PC-9 (cell line): ENCODE measurements at regions of chr6 and their contacts with region 1.

Region 1: DNA sequence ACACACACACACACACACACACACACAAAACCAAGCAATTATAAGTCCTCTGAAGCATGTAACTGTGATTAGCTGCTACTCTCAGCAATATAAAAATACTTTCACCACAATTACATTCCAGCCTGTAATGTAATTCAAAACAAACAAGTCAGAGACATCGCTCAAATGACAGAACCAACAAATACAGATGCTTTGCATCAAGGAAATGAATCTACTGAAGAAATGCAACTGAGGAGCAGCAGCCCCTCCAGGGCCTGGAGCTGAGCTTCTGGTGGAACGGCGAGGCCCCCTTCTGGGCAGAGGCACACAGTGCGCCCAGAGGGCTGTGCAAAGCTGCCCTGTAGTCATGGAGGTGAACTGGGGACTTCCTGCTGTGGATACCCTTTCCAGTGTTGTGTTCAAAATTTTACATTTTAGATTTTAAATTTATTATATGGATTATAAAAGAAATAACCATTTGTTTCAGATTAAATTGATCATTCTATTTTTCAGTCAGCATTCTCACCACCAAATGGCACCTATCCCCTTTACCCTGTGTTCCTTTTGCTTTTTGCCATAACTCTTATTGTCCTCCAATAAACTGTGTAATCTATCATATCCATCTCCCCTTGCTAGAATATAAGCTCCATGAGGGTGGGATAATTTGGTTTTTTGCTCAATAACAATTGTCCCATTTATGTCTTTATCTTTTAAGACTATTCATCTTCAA is 23.2 kb downstream of the ADAT2 start:
- DNase-seq: peak; percentile 80 to 86
- H3K4me3 ChIP-seq: no peak overlapping the region
- H3K27ac ChIP-seq: no peak overlapping the region
- H3K4me1 ChIP-seq: peaks cover 7% of the 10 kb centered on the region
- H3K27me3 ChIP-seq: no peaks in the 10 kb centered on the region
- CTCF ChIP-seq: peak; percentile 96

Region 2: DNA sequence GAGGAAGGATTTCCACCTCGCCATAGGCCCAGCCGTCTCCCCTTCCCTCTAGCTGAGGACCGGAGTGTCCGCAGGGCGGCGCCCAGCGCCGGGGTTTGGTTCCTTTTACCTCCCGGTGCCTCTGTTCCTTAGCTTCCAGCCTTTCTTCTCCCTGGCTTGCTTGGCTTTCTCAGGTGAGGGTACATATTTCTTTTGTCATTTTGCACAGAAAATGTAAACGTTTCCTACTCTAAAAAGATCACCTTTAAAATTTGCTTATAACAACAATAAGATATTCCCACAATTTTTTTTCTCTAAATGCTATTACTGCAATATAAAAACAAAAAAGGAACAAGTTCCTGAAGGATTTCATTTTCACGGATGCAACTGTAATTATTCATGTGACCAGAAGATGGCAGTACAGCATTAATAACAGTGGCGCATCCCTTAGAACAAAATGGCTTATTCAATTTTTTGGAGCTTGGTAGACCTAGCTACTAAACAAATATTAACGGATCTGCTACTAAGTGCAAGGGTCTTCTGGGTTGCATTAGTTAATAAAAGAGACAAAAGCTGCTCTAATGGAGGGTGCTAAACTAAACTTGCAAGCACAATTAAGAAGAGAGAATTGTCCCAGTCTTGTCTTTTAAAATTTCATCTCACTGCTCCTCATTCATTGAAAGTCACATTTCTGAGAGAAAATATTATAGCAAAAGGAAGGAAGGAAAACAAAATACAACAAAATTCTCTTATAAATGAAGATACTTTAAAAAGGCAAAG is 952.6 kb before region 1 on chr6:
- CTCF ChIA-PET with region 1: interaction called, 8 read pairs
- POLR2A ChIA-PET with region 1: no interaction called
- intact Hi-C with region 1: loop called (anchors 1 kb)
- DNase-seq: peak; percentile 58 to 71
- H3K4me3 ChIP-seq: peak overlapping the region; percentile 38; the same call in 1 of the 2 replicates
- H3K27ac ChIP-seq: no peak overlapping the region
- H3K4me1 ChIP-seq: no peaks in the 10 kb centered on the region
- H3K27me3 ChIP-seq: no peaks in the 10 kb centered on the region
- CTCF ChIP-seq: peak; percentile 91

Region 3: GRCh38 chr6:142692942-142693341 is 734.3 kb before region 1 on chr6:
- CTCF ChIA-PET with region 1: no interaction called
- POLR2A ChIA-PET with region 1: no interaction called
- intact Hi-C with region 1: loop called (anchors 1 kb)
- DNase-seq: peak; percentile 37 to 58
- H3K4me3 ChIP-seq: no peak overlapping the region
- H3K27ac ChIP-seq: no peak overlapping the region
- H3K4me1 ChIP-seq: peaks cover 21% of the 10 kb centered on the region; the same call in 1 of the 2 replicates
- H3K27me3 ChIP-seq: no peaks in the 10 kb centered on the region
- CTCF ChIP-seq: peak; percentile 97

Region 4: GRCh38 chr6:142845624-142846458 is 581.4 kb before region 1 on chr6:
- CTCF ChIA-PET with region 1: no interaction called
- POLR2A ChIA-PET with region 1: no interaction called
- intact Hi-C with region 1: loop called (anchors 5 kb)
- DNase-seq: peak; percentile 86
- H3K4me3 ChIP-seq: peak overlapping the region; percentile 51; the same call in 1 of the 2 replicates
- H3K27ac ChIP-seq: peak overlapping the region; percentile 89
- H3K4me1 ChIP-seq: peaks cover 84% of the 10 kb centered on the region
- H3K27me3 ChIP-seq: no peaks in the 10 kb centered on the region
- CTCF ChIP-seq: no peak

Region 5: GRCh38 chr6:142966294-142966693 is 461.0 kb before region 1 on chr6:
- CTCF ChIA-PET with region 1: no interaction called
- POLR2A ChIA-PET with region 1: no interaction called
- intact Hi-C with region 1: no loop called
- DNase-seq: no peak
- H3K4me3 ChIP-seq: no peak overlapping the region
- H3K27ac ChIP-seq: no peak overlapping the region
- H3K4me1 ChIP-seq: no peaks in the 10 kb centered on the region
- H3K27me3 ChIP-seq: no peaks in the 10 kb centered on the region
- CTCF ChIP-seq: no peak

Region 6: DNA sequence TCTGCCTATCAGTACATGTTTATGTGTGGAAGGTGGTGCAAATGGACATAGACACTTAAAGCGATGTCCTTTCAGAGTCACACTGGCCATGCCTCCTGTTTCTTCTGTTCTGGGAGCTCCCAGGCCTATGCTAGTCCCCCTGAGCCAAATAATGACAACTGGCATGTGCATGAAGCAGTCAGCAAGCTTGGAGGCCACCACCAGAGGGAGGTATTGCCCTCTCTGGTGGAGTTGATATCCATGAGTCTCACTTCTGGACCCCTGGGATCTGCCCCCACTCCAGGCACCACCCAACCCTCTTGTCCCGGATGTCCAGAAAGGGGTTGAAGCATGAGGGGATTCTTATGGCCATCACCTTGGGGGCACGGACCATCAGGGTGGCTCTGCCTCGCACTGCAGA is 194.4 kb before region 1 on chr6:
- CTCF ChIA-PET with region 1: interaction called, 3 read pairs
- POLR2A ChIA-PET with region 1: no interaction called
- intact Hi-C with region 1: loop called (anchors 1 kb)
- DNase-seq: peak in 1 of 2 experiments; percentile 26
- H3K4me3 ChIP-seq: no peak overlapping the region
- H3K27ac ChIP-seq: no peak overlapping the region
- H3K4me1 ChIP-seq: no peaks in the 10 kb centered on the region
- H3K27me3 ChIP-seq: no peaks in the 10 kb centered on the region
- CTCF ChIP-seq: peak; percentile 78

Region 7: DNA sequence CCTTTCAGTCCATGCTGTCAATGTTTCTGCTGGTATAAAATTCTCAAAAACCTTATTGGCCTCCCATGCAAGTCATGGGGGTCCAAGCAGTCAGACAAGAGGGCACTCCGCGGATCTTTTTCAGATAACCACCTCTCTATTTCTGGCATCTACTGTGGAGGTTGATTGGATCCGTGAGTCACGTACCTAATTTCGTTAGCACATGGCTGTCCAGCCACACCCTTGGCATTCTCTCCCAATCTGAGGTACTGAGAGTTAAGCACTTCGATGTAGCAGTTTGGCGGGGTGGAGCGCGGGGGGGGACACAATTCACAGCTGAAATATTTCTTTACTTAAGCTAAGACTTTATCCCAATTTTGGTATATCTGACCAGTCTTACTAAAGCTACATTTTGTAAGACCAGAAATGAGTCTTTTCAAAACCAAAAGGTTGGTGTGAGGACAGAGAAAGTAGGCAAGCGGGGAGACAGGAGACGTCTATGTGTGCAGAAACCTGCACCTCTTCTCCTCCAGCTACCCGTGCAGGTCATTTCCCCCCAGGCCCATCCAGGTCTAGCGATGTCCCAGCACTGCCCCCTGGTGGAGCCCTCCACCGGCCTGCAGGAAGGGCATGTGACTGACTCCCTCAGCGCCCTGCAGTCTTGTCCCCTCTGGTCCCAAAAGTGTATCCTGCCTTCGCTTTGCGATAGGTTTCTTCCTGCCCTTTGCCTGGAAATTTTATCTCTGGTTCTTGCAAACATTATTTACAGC is 89.9 kb before region 1 on chr6:
- CTCF ChIA-PET with region 1: no interaction called
- POLR2A ChIA-PET with region 1: no interaction called
- intact Hi-C with region 1: loop called (anchors 10 kb)
- DNase-seq: peak in 1 of 2 experiments; percentile 26
- H3K4me3 ChIP-seq: no peak overlapping the region
- H3K27ac ChIP-seq: peak overlapping the region; percentile 87
- H3K4me1 ChIP-seq: peaks cover 29% of the 10 kb centered on the region
- H3K27me3 ChIP-seq: no peaks in the 10 kb centered on the region
- CTCF ChIP-seq: 0 out of 2 replicates have a peak, but pooled peaks have one; percentile 36

Region 8: DNA sequence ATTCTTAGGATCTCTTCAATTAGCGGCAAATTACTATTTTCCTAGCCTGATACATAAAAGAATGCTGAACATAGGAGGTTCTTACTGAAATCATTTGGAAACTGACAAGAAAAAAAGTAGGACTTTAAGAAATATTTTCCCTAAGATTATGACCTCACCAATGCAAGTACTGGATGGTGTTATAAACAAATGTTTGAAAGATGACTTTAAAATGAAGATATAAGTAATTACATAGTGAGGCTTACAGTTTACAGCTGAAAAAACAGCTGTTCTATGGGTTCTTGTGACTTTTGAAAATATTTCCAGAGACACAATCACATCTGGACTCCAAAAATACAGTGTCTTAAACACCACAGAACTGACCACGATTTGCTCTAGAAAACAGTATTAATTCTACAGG is 41.6 kb before region 1 on chr6:
- CTCF ChIA-PET with region 1: no interaction called
- POLR2A ChIA-PET with region 1: no interaction called
- intact Hi-C with region 1: no loop called
- DNase-seq: no peak
- H3K4me3 ChIP-seq: no peak overlapping the region
- H3K27ac ChIP-seq: no peak overlapping the region
- H3K4me1 ChIP-seq: no peaks in the 10 kb centered on the region
- H3K27me3 ChIP-seq: no peaks in the 10 kb centered on the region
- CTCF ChIP-seq: no peak